ENCODE measurements at regions of chr4 and their contacts with region 1.

Region 1: GRCh38 chr4:121736735-121737351 is 28.1 kb downstream of the SMIM43 start:
- DNase-seq: peak; percentile 49 to 58
- ATAC-seq: peak; percentile 89 to 96
- H3K4me3 ChIP-seq: no peak overlapping the region
- H3K27ac ChIP-seq: no peak overlapping the region
- H3K4me1 ChIP-seq: no peaks in the 10 kb centered on the region
- CTCF ChIP-seq: peak; percentile 70
- EP300 ChIP-seq: no peak
- POLR2A ChIP-seq: no peak
- RAD21 ChIP-seq: peak; percentile 80 to 85

Region 2: GRCh38 chr4:121370729-121371325 is 366.0 kb before region 1 on chr4:
- CTCF ChIA-PET with region 1: interaction called, 30 read pairs
- POLR2A ChIA-PET with region 1: no interaction called
- DNase-seq: peak in 1 of 2 experiments; percentile 23
- ATAC-seq: peak; percentile 59 to 73; a peak in 3 of 6 replicates
- H3K4me3 ChIP-seq: no peak overlapping the region
- H3K27ac ChIP-seq: no peak overlapping the region
- H3K4me1 ChIP-seq: no peaks in the 10 kb centered on the region
- CTCF ChIP-seq: peak; percentile 56
- EP300 ChIP-seq: no peak
- POLR2A ChIP-seq: no peak
- RAD21 ChIP-seq: peak; percentile 46 to 52

Region 3: GRCh38 chr4:121462660-121463261 is 274.1 kb before region 1 on chr4:
- CTCF ChIA-PET with region 1: interaction called, 28 read pairs
- POLR2A ChIA-PET with region 1: no interaction called
- DNase-seq: peak; percentile 8 to 62
- ATAC-seq: peak; percentile 84 to 87
- H3K4me3 ChIP-seq: no peak overlapping the region
- H3K27ac ChIP-seq: no peak overlapping the region
- H3K4me1 ChIP-seq: no peaks in the 10 kb centered on the region
- CTCF ChIP-seq: peak; percentile 60
- EP300 ChIP-seq: no peak
- POLR2A ChIP-seq: no peak
- RAD21 ChIP-seq: peak; percentile 56 to 57

Region 4: DNA sequence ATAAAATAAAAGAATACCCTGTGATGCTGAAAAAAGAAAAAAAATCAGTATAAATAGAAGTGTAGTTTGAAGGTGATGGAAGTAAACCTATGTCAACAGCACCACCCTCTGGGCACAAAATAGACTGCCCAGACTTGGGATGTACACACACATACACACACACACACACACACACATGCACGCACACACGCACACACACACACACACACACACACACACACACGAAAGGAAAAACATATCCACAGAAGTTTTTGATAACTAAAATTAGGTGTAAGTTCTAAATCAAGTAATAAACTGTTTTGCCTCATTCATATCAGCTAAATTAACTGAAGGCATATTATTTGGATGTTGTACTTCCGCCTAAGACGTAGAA is 80.6 kb before region 1 on chr4:
- CTCF ChIA-PET with region 1: interaction called, 15 read pairs
- POLR2A ChIA-PET with region 1: no interaction called
- DNase-seq: peak in 1 of 2 experiments; percentile 69
- ATAC-seq: peak; percentile 59 to 71; a peak in 4 of 6 replicates
- H3K4me3 ChIP-seq: no peak overlapping the region
- H3K27ac ChIP-seq: no peak overlapping the region
- H3K4me1 ChIP-seq: no peaks in the 10 kb centered on the region
- CTCF ChIP-seq: peak; percentile 37
- EP300 ChIP-seq: no peak
- POLR2A ChIP-seq: no peak
- RAD21 ChIP-seq: peak; percentile 54; a peak in 4 of 5 replicates

Region 5: GRCh38 chr4:121696581-121697461 is 40.0 kb before region 1 on chr4 and contains the start of gene ANXA5:
- CTCF ChIA-PET with region 1: interaction called, 14 read pairs
- POLR2A ChIA-PET with region 1: interaction called, 5 read pairs
- DNase-seq: peak; percentile 42 to 81
- ATAC-seq: peak; percentile 94 to 95
- H3K4me3 ChIP-seq: peak within 1 kb of the TSS; percentile 83
- H3K27ac ChIP-seq: peak within 1 kb of the TSS; percentile 86 to 97
- H3K4me1 ChIP-seq: peaks cover 43% of the 10 kb centered on the region
- CTCF ChIP-seq: peak; percentile 41
- EP300 ChIP-seq: no peak
- POLR2A ChIP-seq: peak; percentile 64
- RAD21 ChIP-seq: peak; percentile 45 to 70
- polyA plus RNA-seq, gene ANXA5: 330 and 356 TPM in 2 replicates

Region 6: DNA sequence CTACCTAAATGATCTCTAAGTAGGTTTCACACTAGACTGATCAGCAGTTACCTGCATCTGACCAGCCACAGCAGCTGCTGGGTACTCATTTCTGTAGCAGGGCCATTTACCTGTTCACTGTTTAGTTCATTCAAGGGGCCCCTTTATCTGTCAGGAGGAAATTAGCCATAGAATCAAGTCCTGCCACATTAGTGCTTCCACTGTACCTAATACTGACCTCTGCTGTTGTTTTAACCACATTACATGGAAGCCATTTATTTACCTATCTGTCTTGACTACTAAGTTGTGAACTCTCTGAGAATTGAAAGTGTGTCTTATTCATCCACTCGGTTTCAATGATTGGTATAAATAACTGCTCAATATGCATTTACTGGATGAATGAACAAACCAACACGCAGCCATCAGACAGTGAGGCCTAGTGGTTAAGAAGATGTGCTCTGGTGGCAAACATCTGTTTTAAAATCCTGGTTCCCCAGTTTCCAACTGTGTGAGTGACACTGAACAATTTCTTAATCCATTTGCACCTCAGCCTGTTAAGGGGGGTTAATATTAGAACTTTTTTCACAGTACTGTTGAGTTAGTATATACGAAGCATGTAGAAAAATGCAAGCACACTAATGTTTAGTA is 10.1 kb before region 1 on chr4:
- CTCF ChIA-PET with region 1: interaction called, 14 read pairs
- POLR2A ChIA-PET with region 1: no interaction called
- DNase-seq: peak; percentile 29 to 61
- ATAC-seq: peak; percentile 75 to 83; a peak in 5 of 6 replicates
- H3K4me3 ChIP-seq: no peak overlapping the region
- H3K27ac ChIP-seq: peak overlapping the region in 1 of 2 experiments; percentile 70; a peak in 3 of 6 replicates
- H3K4me1 ChIP-seq: peaks cover 7% of the 10 kb centered on the region; the same call in 2 of the 3 replicates
- CTCF ChIP-seq: peak; percentile 60
- EP300 ChIP-seq: no peak
- POLR2A ChIP-seq: no peak
- RAD21 ChIP-seq: peak; percentile 66 to 73